Brain microvascular endothelial cell (primary cell): ENCODE measurements at regions of chr4 and their contacts with region 1.

Region 1: DNA sequence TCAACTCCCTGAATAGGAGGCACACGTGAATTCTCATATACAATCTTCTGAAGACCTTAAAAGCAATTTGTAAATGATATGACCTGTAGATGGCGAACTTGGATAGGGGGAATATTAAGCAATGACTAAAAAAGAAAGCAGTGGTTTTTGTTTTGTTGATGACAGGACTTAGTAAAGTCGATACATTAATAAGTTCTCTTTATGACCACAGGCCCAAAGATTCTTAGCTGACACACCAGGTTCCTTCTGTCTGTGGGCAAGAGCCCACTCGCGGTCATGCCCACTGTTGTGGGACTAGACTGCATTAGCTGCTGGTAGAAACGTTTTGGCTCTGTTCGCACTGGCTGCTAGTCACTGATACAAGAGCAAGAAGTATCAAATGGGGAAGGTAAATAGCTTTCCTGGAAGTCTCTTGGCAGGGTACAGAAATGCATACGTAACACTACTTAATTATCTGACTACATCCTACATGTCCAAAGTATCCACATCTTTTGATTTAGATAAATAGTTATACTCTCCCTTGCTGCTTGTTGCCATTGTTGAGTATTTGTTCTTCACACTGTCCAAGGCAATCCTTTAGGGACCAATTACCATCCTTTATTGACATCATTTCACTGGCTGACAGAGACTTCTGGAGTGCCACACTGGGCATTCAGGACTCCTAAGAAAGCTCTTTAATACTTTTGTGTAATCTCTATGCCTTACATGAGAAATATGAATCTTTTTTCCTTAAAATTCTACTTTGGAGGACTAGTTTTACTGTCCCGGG is 31.0 kb downstream of the ALPK1 start:
- DNase-seq: peak; percentile 36
- H3K4me3 ChIP-seq: no peak overlapping the region
- H3K27ac ChIP-seq: no peak overlapping the region
- H3K27me3 ChIP-seq: no peaks in the 10 kb centered on the region
- CTCF ChIP-seq: peak; percentile 37

Region 2: GRCh38 chr4:112170451-112170993 is 157.6 kb before region 1 on chr4:
- in situ Hi-C with region 1: no loop called
- DNase-seq: peak; percentile 87
- H3K4me3 ChIP-seq: no peak overlapping the region
- H3K27ac ChIP-seq: peak overlapping the region; percentile 85
- H3K27me3 ChIP-seq: no peaks in the 10 kb centered on the region
- CTCF ChIP-seq: no peak

Region 3: GRCh38 chr4:112231779-112232713 is 96.1 kb before region 1 on chr4 and contains the start of gene AP1AR:
- in situ Hi-C with region 1: no loop called
- DNase-seq: peak; percentile 63
- H3K4me3 ChIP-seq: peak within 1 kb of the TSS; percentile 87
- H3K27ac ChIP-seq: peak within 1 kb of the TSS; percentile 67
- H3K27me3 ChIP-seq: no peaks in the 10 kb centered on the region
- CTCF ChIP-seq: peak; percentile 56

Region 4: GRCh38 chr4:112604589-112604988 is 276.4 kb after region 1 on chr4:
- in situ Hi-C with region 1: loop called (anchors 25 kb)
- DNase-seq: peak; percentile 76
- H3K4me3 ChIP-seq: no peak overlapping the region
- H3K27ac ChIP-seq: no peak overlapping the region
- H3K27me3 ChIP-seq: no peaks in the 10 kb centered on the region
- CTCF ChIP-seq: peak; percentile 71